ENCODE measurements at regions of chr5 and their contacts with region 1.

Region 1: DNA sequence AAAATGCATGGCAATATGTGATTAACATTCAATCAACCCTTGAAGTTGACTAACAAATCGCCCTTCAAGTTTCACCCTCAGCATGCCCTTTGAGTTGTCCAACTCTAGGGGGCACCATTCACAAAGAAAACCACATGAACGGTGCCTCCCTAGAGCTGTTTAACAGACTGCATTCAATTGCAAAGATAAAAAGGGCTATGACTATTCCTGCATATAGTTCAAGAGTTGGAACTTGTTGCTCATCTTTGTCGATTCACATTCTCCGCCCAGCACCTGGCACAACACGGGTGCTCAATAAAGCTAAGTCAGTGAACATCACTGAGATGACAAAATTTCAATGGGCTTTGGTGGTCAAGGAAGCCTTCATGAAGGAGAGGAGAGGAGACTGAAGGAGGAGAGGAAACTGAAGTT is 69.6 kb upstream of the SLC30A5 start:
- DNase-seq: peak; percentile 39
- H3K4me3 ChIP-seq: no peak overlapping the region
- H3K27ac ChIP-seq: no peak overlapping the region
- H3K4me1 ChIP-seq: no peaks in the 10 kb centered on the region
- H3K27me3 ChIP-seq: no peaks in the 10 kb centered on the region
- CTCF ChIP-seq: peak; percentile 77 to 78

Region 2: GRCh38 chr5:68424799-68425537 is 599.3 kb before region 1 on chr5:
- CTCF ChIA-PET with region 1: no interaction called
- dilution Hi-C with region 1: no loop called
- in situ Hi-C with region 1: no loop called
- intact Hi-C with region 1: no loop called
- DNase-seq: peak; percentile 73
- H3K4me3 ChIP-seq: no peak overlapping the region
- H3K27ac ChIP-seq: peak overlapping the region; percentile 83
- H3K4me1 ChIP-seq: peaks cover 21% of the 10 kb centered on the region
- H3K27me3 ChIP-seq: no peaks in the 10 kb centered on the region
- CTCF ChIP-seq: no peak

Region 3: GRCh38 chr5:68821056-68821455 is 203.2 kb before region 1 on chr5:
- CTCF ChIA-PET with region 1: no interaction called
- dilution Hi-C with region 1: no loop called
- in situ Hi-C with region 1: no loop called
- intact Hi-C with region 1: no loop called
- DNase-seq: no peak
- H3K4me3 ChIP-seq: no peak overlapping the region
- H3K27ac ChIP-seq: no peak overlapping the region
- H3K4me1 ChIP-seq: no peaks in the 10 kb centered on the region
- H3K27me3 ChIP-seq: peaks cover 4% of the 10 kb centered on the region
- CTCF ChIP-seq: no peak

Region 4: GRCh38 chr5:68924490-68925145 is 99.6 kb before region 1 on chr5:
- CTCF ChIA-PET with region 1: no interaction called
- dilution Hi-C with region 1: no loop called
- in situ Hi-C with region 1: no loop called
- intact Hi-C with region 1: no loop called
- DNase-seq: peak; percentile 98
- H3K4me3 ChIP-seq: no peak overlapping the region
- H3K27ac ChIP-seq: peak overlapping the region; percentile 40
- H3K4me1 ChIP-seq: peaks cover 16% of the 10 kb centered on the region
- H3K27me3 ChIP-seq: no peaks in the 10 kb centered on the region
- CTCF ChIP-seq: no peak

Region 5: GRCh38 chr5:69048230-69048629 is 24.0 kb after region 1 on chr5:
- CTCF ChIA-PET with region 1: no interaction called
- dilution Hi-C with region 1: no loop called
- in situ Hi-C with region 1: no loop called
- intact Hi-C with region 1: loop called (anchors 1 kb)
- DNase-seq: no peak
- H3K4me3 ChIP-seq: no peak overlapping the region
- H3K27ac ChIP-seq: no peak overlapping the region
- H3K4me1 ChIP-seq: no peaks in the 10 kb centered on the region
- H3K27me3 ChIP-seq: no peaks in the 10 kb centered on the region
- CTCF ChIP-seq: peak; percentile 20 to 29

Region 6: GRCh38 chr5:69083412-69083811 is 59.2 kb after region 1 on chr5:
- CTCF ChIA-PET with region 1: no interaction called
- dilution Hi-C with region 1: no loop called
- in situ Hi-C with region 1: no loop called
- intact Hi-C with region 1: loop called (anchors 5 kb)
- DNase-seq: peak; percentile 35
- H3K4me3 ChIP-seq: no peak overlapping the region
- H3K27ac ChIP-seq: no peak overlapping the region
- H3K4me1 ChIP-seq: peaks cover 6% of the 10 kb centered on the region
- H3K27me3 ChIP-seq: no peaks in the 10 kb centered on the region
- CTCF ChIP-seq: peak in 1 of 2 donors; percentile 32

Measured in mammary epithelial cell (primary cell).